B cell (primary cell): ENCODE measurements at regions of chr13 and their contacts with region 1.

Region 1: DNA sequence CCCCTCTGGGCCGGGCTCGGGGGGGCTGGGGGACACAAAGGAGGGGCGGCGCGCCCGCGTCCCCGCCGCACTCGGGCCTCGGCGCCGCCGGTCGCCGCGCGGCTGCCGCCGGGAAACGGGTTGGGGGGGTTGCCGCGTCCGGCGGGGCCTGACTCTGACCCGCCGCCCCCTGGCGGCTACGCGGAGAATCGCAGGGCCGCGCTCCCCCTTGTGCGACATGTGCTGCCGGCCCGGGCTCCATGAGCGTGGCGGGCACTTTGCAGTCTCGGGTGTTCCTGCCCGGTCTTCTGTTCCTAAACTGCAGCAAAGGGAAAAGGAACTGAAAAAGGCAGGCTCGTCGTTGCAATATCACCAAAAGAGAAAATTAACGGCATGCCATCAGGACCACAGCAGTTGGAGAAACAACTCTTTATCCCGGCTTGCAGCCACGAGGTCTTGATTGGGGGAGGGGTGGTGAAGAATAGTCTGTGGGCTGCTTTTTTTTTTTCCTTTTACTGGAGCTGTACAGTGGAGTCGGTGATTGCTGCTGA is 1.5 kb downstream of the MIR17HG start:
- DNase-seq: peak; percentile 95
- ATAC-seq: peak; percentile 63
- H3K4me3 ChIP-seq: peak overlapping the region; percentile 45 to 77 (median 66)
- H3K4me3 Mint-ChIP-seq: peak overlapping the region; percentile 95
- H3K27ac ChIP-seq: peak overlapping the region in 1 of 2 donors; percentile 81
- H3K27ac Mint-ChIP-seq: peak overlapping the region; percentile 91
- H3K4me1 ChIP-seq: peaks cover 20 to 21% of the 10 kb centered on the region in 2 donors
- H3K4me1 Mint-ChIP-seq: peaks cover 37% of the 10 kb centered on the region
- H3K27me3 ChIP-seq: no peaks in the 10 kb centered on the region
- H3K27me3 Mint-ChIP-seq: no peaks in the 10 kb centered on the region
- CTCF ChIP-seq: peak; percentile 86

Region 2: GRCh38 chr13:91398413-91399272 is 49.7 kb after region 1 on chr13 and contains the start of gene GPC5:
- CTCF ChIA-PET with region 1: interaction called, 3 read pairs
- POLR2A ChIA-PET with region 1: no interaction called
- intact Hi-C with region 1: loop called (anchors 1 kb)
- DNase-seq: peak; percentile 85
- ATAC-seq: peak; percentile 99
- H3K4me3 ChIP-seq: peak within 1 kb of the TSS; percentile 21 to 72 (median 55)
- H3K4me3 Mint-ChIP-seq: peak within 1 kb of the TSS; percentile 82
- H3K27ac ChIP-seq: no peak within 1 kb of the TSS
- H3K27ac Mint-ChIP-seq: no peak within 1 kb of the TSS
- H3K4me1 ChIP-seq: peaks cover 21 to 22% of the 10 kb centered on the region in 2 donors
- H3K4me1 Mint-ChIP-seq: peaks cover 23% of the 10 kb centered on the region
- H3K27me3 ChIP-seq: peaks cover 7 to 53% (median 32%) of the 10 kb centered on the region in 4 experiments
- H3K27me3 Mint-ChIP-seq: peaks cover 31% of the 10 kb centered on the region
- CTCF ChIP-seq: no peak
- total RNA-seq, gene GPC5: 0.15 and 0.17 TPM in 2 replicates

Region 3: DNA sequence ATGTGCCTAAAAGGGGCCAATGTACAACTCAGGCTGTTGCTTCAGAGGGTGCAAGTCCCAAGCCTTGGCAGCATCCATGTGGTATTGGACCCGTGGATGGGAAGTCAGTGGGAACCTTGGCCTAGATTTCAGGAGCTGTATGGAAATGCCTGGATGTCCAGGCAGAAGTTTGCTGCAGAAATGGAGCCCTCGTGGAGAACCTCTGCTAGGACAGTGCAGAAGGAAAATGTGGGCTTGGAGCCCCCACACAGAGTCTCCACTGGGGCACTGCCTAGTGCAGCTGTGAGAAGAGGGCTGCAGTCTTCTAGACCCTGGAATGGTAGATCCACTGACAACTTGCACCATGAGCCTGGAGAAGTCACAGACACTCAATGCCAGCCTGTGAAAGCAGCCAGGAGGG is 77.9 kb after region 1 on chr13:
- CTCF ChIA-PET with region 1: no interaction called
- POLR2A ChIA-PET with region 1: no interaction called
- intact Hi-C with region 1: no loop called
- DNase-seq: no peak
- ATAC-seq: no peak
- H3K4me3 ChIP-seq: no peak overlapping the region
- H3K4me3 Mint-ChIP-seq: no peak overlapping the region
- H3K27ac ChIP-seq: no peak overlapping the region
- H3K27ac Mint-ChIP-seq: no peak overlapping the region
- H3K4me1 ChIP-seq: no peaks in the 10 kb centered on the region
- H3K4me1 Mint-ChIP-seq: no peaks in the 10 kb centered on the region
- H3K27me3 ChIP-seq: no peaks in the 10 kb centered on the region
- H3K27me3 Mint-ChIP-seq: no peaks in the 10 kb centered on the region
- CTCF ChIP-seq: no peak